WTC11 (cell line): ENCODE measurements at regions of chr5 and their contacts with region 1.

Region 1: DNA sequence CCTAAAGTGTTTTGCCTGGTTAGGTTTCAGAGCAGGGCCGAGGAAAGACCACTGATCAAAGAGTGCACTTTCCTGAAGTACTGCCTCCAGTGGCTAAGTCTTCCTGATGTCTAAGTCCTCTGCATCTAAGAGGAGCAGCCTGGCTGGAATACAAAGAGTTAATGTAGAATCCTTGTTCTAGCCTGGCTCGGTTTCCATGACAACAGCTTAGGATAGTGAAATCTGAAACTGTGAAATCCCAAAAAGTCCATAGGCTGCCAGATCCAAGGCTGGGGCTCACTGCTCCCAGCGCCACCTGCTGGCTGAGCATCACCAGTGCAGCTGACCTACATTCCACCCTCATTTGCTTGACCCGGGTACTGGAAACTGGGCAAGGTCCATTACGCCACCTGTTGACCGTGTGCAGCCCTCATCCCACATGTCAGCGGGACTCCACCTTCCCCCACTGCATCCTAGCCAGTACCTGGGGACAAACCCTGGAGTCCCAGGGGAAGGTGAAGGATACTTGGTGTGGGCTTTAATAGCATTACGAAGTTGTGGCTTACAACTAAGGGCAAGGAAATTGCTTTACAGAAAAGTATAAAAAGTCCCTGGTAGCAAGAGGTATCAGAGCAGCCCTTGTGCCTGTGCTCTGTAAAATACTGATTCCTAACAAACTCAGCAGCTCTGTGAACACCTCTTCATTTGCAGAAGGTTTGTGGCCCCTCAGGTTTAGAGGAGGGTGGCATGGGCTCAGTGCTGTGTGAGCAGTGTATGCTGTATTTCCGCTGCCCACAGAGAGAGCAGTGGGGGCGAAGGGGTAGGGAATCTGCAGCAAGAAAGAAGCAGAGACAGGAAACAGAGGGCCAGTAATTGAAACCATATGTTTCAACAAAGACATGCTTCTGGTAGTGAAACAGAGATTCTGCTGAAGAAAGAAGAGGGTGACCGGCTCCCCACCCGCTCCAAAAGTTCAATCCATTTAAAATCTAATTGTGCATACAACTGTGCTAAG is 36.0 kb downstream of the PCDHGC5 start:
- DNase-seq: peak; percentile 93
- ATAC-seq: peak; percentile 98
- H3K4me3 Mint-ChIP-seq: no peak overlapping the region
- H3K27ac Mint-ChIP-seq: peak overlapping the region; percentile 87
- H3K4me1 Mint-ChIP-seq: peaks cover 23% of the 10 kb centered on the region
- H3K27me3 Mint-ChIP-seq: no peaks in the 10 kb centered on the region
- CTCF ChIP-seq: peak; percentile 97

Region 2: GRCh38 chr5:141369994-141370848 is 154.7 kb before region 1 on chr5 and contains the start of gene PCDHGB3:
- CTCF ChIA-PET with region 1: interaction called, 10 read pairs
- POLR2A ChIA-PET with region 1: no interaction called
- DNase-seq: peak; percentile 56
- ATAC-seq: peak; percentile 95
- H3K4me3 Mint-ChIP-seq: peak within 1 kb of the TSS; percentile 61
- H3K27ac Mint-ChIP-seq: peak within 1 kb of the TSS; percentile 91
- H3K4me1 Mint-ChIP-seq: peaks cover 5% of the 10 kb centered on the region
- H3K27me3 Mint-ChIP-seq: peaks cover 8% of the 10 kb centered on the region
- CTCF ChIP-seq: no peak
- total RNA-seq, gene PCDHGB3: 3.3 to 4.2 TPM (median 3.5 TPM) in 3 replicates

Region 3: DNA sequence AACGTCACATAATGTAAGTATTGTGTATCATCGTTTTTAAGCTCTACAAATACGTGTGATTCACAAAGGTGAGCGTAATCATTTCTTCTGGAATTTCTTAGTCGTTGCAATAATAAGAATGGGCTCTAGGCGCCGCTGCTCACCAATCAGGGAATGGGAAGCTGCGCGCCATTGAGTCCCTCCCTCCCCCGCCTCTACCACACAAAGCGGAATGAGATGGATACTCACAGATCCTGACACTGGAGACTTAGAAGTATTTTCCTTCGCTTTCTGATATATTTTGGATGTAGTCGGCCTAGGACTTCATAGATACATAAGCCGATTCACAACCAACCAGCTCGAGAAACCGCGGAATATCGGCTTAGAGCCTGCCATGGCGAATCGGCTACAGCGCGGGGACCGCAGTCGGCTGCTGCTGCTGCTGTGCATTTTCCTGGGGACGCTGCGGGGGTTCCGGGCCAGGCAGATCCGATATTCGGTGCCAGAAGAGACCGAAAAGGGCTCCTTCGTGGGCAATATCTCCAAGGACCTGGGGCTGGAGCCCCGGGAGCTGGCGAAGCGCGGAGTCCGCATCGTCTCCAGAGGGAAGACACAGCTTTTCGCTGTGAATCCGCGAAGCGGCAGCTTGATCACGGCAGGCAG is 103.9 kb before region 1 on chr5 and contains the start of gene PCDHGA11:
- CTCF ChIA-PET with region 1: interaction called, 46 read pairs
- POLR2A ChIA-PET with region 1: no interaction called
- DNase-seq: peak; percentile 77
- ATAC-seq: peak; percentile 52
- H3K4me3 Mint-ChIP-seq: peak within 1 kb of the TSS; percentile 81
- H3K27ac Mint-ChIP-seq: peak within 1 kb of the TSS; percentile 47
- H3K4me1 Mint-ChIP-seq: peaks cover 26% of the 10 kb centered on the region
- H3K27me3 Mint-ChIP-seq: peaks cover 14% of the 10 kb centered on the region
- CTCF ChIP-seq: peak; percentile 68
- total RNA-seq, gene PCDHGA11: 7.0 to 8.4 TPM (median 7.1 TPM) in 3 replicates

Region 4: DNA sequence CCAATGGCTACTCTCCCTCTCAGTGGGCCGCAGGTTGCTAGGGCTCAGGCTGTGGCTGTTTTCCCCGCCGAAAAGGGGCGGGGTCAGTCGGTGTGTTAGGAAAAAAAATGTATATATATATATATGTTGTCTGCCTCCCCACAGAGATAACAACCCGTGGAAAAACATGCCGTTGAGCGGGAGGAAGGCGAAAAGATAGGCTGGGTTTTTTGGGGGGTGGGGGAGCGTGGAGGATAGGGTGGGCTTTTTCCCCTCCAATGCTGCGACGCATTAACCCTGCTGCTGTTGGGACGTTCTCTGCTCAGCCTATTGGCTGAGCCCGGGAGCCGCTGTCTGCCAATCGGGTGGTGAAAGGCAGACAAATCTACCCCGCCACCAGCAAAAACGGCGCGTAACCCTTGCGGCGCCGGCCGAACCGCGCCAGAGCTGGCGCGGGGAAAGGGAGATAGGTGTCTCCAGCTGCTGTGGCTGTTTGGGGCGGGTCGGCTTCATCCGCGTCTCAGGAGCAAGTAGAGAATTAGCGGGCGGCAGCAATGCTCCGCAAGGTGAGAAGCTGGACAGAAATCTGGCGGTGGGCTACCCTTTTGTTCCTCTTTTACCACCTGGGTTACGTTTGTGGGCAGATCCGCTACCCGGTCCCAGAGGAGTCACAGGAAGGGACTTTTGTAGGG is 40.1 kb before region 1 on chr5 and contains the start of gene PCDHGC4:
- CTCF ChIA-PET with region 1: interaction called, 20 read pairs
- POLR2A ChIA-PET with region 1: interaction called, 3 read pairs
- DNase-seq: peak; percentile 84
- ATAC-seq: peak; percentile 89
- H3K4me3 Mint-ChIP-seq: peak within 1 kb of the TSS; percentile 71
- H3K27ac Mint-ChIP-seq: peak within 1 kb of the TSS; percentile 90
- H3K4me1 Mint-ChIP-seq: peaks cover 60% of the 10 kb centered on the region
- H3K27me3 Mint-ChIP-seq: peaks cover 33% of the 10 kb centered on the region
- CTCF ChIP-seq: no peak
- total RNA-seq, gene PCDHGC4: 4.5 to 6.1 TPM (median 5.1 TPM) in 3 replicates

Region 5: DNA sequence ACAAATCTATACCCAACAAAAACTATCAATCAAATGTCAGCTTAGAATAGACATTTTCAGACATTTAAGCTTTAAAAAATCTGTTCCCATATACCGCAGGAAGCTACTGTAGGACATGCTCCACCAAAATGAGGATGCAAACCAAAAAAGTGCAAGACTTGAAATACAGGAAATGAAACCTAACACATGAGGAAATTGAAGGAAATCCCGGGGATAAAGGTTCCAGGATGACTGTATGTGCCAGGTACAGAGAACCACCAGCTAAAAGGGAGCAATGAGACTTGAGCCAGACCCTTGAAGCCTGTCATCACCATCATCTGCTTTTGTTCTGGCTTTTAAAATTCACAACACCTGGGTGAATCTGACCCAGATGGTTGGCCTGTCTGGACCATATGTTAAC is 72.5 kb after region 1 on chr5:
- CTCF ChIA-PET with region 1: no interaction called
- POLR2A ChIA-PET with region 1: no interaction called
- DNase-seq: no peak
- ATAC-seq: no peak
- H3K4me3 Mint-ChIP-seq: no peak overlapping the region
- H3K27ac Mint-ChIP-seq: no peak overlapping the region
- H3K4me1 Mint-ChIP-seq: no peaks in the 10 kb centered on the region
- H3K27me3 Mint-ChIP-seq: no peaks in the 10 kb centered on the region
- CTCF ChIP-seq: no peak